IMR-90 (cell line): ENCODE measurements at regions of chr14 and their contacts with region 1.

Region 1: DNA sequence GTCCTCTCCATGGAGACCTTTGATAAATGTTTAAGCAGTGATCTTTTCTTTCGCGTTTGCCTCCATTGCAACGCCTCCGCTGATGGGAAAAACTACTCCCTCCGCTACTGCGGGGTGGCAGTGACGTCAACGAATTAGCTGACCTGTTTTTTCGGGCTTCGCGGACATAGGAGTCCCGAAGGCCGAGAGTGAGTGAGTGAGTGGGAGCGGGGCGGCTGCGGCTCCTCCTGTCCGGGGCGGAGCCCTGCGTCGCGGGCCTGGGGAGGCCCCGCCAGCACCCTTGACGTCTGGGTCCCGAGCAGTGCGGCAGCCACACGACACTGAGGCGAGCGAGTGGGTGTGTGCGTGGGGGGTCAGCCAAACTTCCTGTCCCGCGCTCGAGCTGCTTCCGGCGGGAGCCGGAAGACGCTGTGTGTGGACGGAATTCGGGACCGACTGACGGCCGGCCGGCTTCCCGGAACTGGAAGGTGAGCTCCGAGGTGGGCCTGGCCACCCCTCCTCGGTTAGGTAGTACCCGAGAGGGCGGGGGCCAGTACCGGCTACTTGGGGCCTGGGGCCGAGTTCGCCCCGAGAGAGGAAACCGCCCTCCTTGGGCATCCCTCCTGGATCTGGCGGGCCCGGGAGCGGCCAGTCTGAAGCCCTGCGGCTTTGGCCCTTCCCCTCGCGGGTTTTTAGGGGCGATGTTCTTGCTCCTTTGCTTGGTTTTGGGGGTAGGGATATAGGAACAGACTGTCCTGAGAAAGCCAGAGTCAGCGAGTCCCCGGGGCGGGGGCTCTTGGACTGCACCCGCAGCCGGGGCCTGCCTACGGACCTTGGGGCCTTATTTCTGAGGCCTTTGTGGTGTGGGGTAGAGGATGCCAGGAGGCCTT is at the start of gene ZNF410:
- DNase-seq: peak; percentile 98
- ATAC-seq: peak; percentile 99
- H3K4me3 ChIP-seq: peak within 1 kb of the TSS; percentile 56
- H3K27ac ChIP-seq: peak within 1 kb of the TSS; percentile 81
- H3K4me1 ChIP-seq: peaks cover 2% of the 10 kb centered on the region; the same call in 1 of the 2 replicates
- H3K27me3 ChIP-seq: no peaks in the 10 kb centered on the region
- CTCF ChIP-seq: no peak
- POLR2A ChIP-seq: peak; percentile 85
- RAD21 ChIP-seq: no peak
- total RNA-seq, gene ZNF410: 73.9 and 89.1 TPM in 2 replicates

Region 2: DNA sequence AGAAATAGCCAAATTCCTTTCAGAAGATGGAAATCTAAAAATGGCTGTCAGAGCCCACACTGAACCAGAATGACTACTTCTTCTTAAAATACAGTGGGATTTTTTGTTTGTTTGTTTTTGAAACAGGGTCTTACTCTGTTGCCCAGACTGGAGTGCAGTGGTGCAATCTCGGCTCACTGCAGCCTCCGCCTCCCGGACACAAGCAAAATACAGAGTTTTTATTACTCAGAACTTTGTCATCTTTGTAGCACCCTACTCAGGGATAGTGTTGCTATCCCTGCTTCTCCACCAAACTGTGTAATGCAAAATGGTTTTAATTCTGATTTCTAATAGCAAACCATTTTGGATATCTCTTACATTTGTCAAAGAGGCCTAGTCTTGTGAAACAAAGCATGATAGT is 16.3 kb after region 1 on chr14:
- CTCF ChIA-PET with region 1: no interaction called
- POLR2A ChIA-PET with region 1: interaction called, 18 read pairs
- dilution Hi-C with region 1: no loop called
- in situ Hi-C with region 1: no loop called
- intact Hi-C with region 1: no loop called
- DNase-seq: peak; percentile 35
- ATAC-seq: peak; percentile 86
- H3K4me3 ChIP-seq: no peak overlapping the region
- H3K27ac ChIP-seq: no peak overlapping the region
- H3K4me1 ChIP-seq: no peaks in the 10 kb centered on the region
- H3K27me3 ChIP-seq: no peaks in the 10 kb centered on the region
- CTCF ChIP-seq: no peak
- POLR2A ChIP-seq: no peak
- RAD21 ChIP-seq: no peak

Region 3: DNA sequence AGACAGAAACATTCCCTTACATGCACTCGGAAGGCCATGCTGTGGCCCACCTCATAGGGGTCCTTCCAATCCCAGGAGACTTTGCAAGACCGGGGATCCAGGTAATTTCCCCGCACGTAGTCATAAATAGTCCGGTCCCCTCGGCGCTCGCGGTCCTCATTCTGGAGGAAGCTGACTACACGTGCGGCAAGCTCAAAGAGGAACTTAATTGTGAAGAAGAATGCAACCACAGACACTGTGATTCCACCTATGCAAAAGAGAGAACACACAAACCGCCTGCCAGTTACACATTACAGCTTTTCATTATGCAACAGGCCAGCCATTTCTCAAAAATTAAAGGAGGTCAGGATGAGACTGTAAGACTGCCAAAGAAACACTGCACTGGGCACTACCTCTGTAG is 797.8 kb after region 1 on chr14:
- CTCF ChIA-PET with region 1: no interaction called
- POLR2A ChIA-PET with region 1: no interaction called
- dilution Hi-C with region 1: no loop called
- in situ Hi-C with region 1: no loop called
- intact Hi-C with region 1: no loop called
- DNase-seq: no peak
- ATAC-seq: no peak
- H3K4me3 ChIP-seq: no peak overlapping the region
- H3K27ac ChIP-seq: no peak overlapping the region
- H3K4me1 ChIP-seq: no peaks in the 10 kb centered on the region
- H3K27me3 ChIP-seq: no peaks in the 10 kb centered on the region
- CTCF ChIP-seq: no peak
- POLR2A ChIP-seq: no peak
- RAD21 ChIP-seq: no peak